Upper lobe of right lung (tissue), 1 donor: ENCODE measurements at regions of chr18 and their contacts with region 1.

Region 1: GRCh38 chr18:9971313-9971920 is 57.6 kb downstream of the VAPA start:
- DNase-seq: no peak
- ATAC-seq: peak; percentile 89
- H3K4me3 ChIP-seq: no peak overlapping the region
- H3K27ac ChIP-seq: no peak overlapping the region
- H3K4me1 ChIP-seq: peaks cover 1% of the 10 kb centered on the region
- H3K27me3 ChIP-seq: no peaks in the 10 kb centered on the region
- CTCF ChIP-seq: peak; percentile 81

Region 2: GRCh38 chr18:10194605-10195004 is 223.2 kb after region 1 on chr18:
- intact Hi-C with region 1: no loop called
- DNase-seq: no peak
- ATAC-seq: no peak
- H3K4me3 ChIP-seq: no peak overlapping the region
- H3K27ac ChIP-seq: no peak overlapping the region
- H3K4me1 ChIP-seq: peaks cover 8% of the 10 kb centered on the region
- H3K27me3 ChIP-seq: no peaks in the 10 kb centered on the region
- CTCF ChIP-seq: no peak

Region 3: GRCh38 chr18:10519999-10520935 is 548.9 kb after region 1 on chr18:
- intact Hi-C with region 1: loop called (anchors 5 kb)
- DNase-seq: peak; percentile 87
- ATAC-seq: peak; percentile 91
- H3K4me3 ChIP-seq: no peak overlapping the region
- H3K27ac ChIP-seq: no peak overlapping the region
- H3K4me1 ChIP-seq: peaks cover 20% of the 10 kb centered on the region
- H3K27me3 ChIP-seq: no peaks in the 10 kb centered on the region
- CTCF ChIP-seq: peak; percentile 74